Right ventricle myocardium superior (tissue), 1 donor: ENCODE measurements at regions of chr13 and their contacts with region 1.

Region 1: DNA sequence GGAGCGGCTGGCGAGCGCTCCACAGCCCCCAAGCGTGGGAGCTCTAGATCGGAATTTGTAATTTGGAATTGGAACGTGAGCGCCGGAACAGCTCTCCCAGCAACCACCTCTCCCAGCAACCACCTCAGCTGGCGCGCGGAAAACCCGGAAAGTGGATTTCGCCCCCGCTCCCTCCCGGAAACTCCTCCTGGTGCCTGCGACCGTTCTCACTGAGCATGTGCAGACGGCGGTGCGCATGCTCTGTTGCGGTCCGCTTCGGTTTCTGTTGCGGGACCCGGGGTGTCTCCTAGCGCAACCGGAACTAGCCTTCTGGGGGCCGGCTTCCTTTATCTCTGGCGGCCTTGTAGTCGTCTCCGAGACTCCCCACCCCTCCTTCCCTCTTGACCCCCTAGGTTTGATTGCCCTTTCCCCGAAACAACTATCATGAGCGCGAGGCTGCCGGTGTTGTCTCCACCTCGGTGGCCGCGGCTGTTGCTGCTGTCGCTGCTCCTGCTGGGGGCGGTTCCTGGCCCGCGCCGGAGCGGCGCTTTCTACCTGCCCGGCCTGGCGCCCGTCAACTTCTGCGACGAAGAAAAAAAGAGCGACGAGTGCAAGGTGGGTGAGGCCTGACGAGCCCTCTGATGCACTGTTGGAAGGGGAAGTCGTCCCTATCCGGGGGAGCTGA is at the start of gene TM9SF2:
- DNase-seq: peak; percentile 98
- ATAC-seq: peak; percentile 92
- total RNA-seq, gene TM9SF2: 56.8 TPM

Region 2: DNA sequence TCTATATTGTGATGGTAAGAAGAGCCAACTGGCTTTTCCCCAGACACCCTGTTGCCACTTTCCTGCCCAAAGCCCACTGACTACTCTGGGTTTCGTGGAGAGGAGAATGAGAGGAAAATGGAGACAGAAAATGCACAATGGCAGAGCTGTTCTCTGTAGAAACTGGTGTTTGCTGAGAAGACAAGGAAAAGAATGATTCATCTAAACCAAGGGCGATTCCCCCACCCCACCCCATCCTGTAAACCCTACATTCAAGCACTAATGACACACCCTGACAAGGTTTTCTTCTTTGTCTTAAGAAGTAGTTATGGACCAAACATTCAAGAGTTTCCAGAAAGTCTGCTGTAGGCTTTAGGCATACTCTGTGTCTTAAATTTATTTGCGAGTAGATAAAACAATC is 592.3 kb before region 1 on chr13:
- intact Hi-C with region 1: no loop called
- DNase-seq: no peak
- ATAC-seq: no peak

Region 3: GRCh38 chr13:99442273-99442895 is 58.9 kb before region 1 on chr13:
- intact Hi-C with region 1: loop called (anchors 10 kb)
- DNase-seq: no peak
- ATAC-seq: peak; percentile 47